T-cell (primary cell): ENCODE measurements at regions of chr17 and their contacts with region 1.

Region 1: GRCh38 chr17:4696437-4696805 is 7.5 kb downstream of the PELP1 start:
- DNase-seq: peak in 3 of 35 experiments; percentile 27 to 70 (median 31)
- ATAC-seq: peak; percentile 57 to 88 (median 70)
- H3K4me3 ChIP-seq: peak overlapping the region in 1 of 2 donors; percentile 28
- H3K4me3 Mint-ChIP-seq: peak overlapping the region; percentile 33 to 67 (median 62)
- H3K27ac ChIP-seq: peak overlapping the region; percentile 90
- H3K27ac Mint-ChIP-seq: peak overlapping the region; percentile 93 to 94
- H3K4me1 ChIP-seq: peaks cover 0 to 20% of the 10 kb centered on the region in 2 experiments
- H3K4me1 Mint-ChIP-seq: peaks cover 41 to 44% (median 43%) of the 10 kb centered on the region in 3 donors
- H3K27me3 ChIP-seq: no peaks in the 10 kb centered on the region
- H3K27me3 Mint-ChIP-seq: no peaks in the 10 kb centered on the region

Region 2: GRCh38 chr17:4110152-4110551 is 586.3 kb before region 1 on chr17:
- CTCF ChIA-PET with region 1: no interaction called
- POLR2A ChIA-PET with region 1: no interaction called
- DNase-seq: no peak
- ATAC-seq: peak in 2 of 4 experiments; percentile 51 to 66
- H3K4me3 ChIP-seq: no peak overlapping the region
- H3K4me3 Mint-ChIP-seq: no peak overlapping the region
- H3K27ac ChIP-seq: peak overlapping the region; percentile 26
- H3K27ac Mint-ChIP-seq: peak overlapping the region; percentile 86 to 91
- H3K4me1 ChIP-seq: peaks cover 10 to 22% of the 10 kb centered on the region in 2 experiments
- H3K4me1 Mint-ChIP-seq: peaks cover 29 to 32% (median 30%) of the 10 kb centered on the region in 3 donors
- H3K27me3 ChIP-seq: no peaks in the 10 kb centered on the region
- H3K27me3 Mint-ChIP-seq: no peaks in the 10 kb centered on the region

Region 3: DNA sequence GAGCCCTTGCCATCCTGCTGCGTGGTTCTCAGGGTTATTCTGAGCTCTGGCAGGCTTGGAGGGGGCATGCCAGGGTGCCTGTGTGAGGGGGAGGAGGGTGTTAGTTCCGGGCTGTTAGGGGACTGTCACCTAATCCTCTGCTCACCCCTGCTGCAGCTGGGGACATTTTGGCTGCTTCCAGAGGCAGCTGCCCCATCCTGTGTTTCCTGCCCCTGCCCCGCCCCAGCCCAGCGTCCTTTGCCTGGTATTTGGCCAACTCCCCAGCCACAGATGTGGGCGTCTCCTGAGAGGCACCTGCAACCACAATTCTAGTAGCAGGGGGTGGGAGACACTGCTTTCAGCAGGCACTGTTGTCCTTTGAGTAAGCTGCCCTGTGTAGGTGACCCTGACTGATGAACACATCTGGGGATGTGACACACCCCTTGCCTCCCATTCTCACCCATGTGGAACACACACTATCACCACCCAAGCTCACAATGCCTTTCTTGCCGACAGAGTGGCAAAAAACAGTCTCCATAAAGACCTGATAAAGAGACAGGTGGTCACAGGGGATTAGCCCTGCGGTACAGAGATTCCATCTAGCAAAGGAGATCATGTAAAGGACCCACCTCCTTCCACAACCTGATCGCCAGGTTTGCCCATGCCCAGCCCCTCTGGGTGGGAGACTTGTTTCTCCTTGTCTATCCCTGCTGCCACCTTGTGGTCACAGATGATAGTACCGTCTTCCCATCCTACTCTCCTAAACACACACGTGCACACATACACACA is 206.8 kb after region 1 on chr17 and contains the start of gene CHRNE:
- CTCF ChIA-PET with region 1: interaction called in 1 of 2 experiments, 11 read pairs
- POLR2A ChIA-PET with region 1: no interaction called
- DNase-seq: peak in 34 of 35 experiments; percentile 48 to 91 (median 70)
- ATAC-seq: peak; percentile 19 to 43 (median 40)
- H3K4me3 ChIP-seq: no peak within 1 kb of the TSS
- H3K4me3 Mint-ChIP-seq: peak within 1 kb of the TSS; percentile 21 to 67 (median 22)
- H3K27ac ChIP-seq: peak within 1 kb of the TSS; percentile 65
- H3K27ac Mint-ChIP-seq: peak within 1 kb of the TSS; percentile 34 to 40
- H3K4me1 ChIP-seq: peaks cover 14 to 60% of the 10 kb centered on the region in 2 experiments
- H3K4me1 Mint-ChIP-seq: peaks cover 36 to 45% (median 38%) of the 10 kb centered on the region in 3 donors
- H3K27me3 ChIP-seq: peaks cover 0 to 28% of the 10 kb centered on the region in 2 experiments
- H3K27me3 Mint-ChIP-seq: no peaks in the 10 kb centered on the region
- total RNA-seq, gene CHRNE: 0.73 to 3.5 (median 1.3) TPM